Posterior cingulate gyrus (tissue), 11 donors: ENCODE measurements at regions of chr10 and their contacts with region 1.

Region 1: GRCh38 chr10:93376372-93377293 is 105.5 kb downstream of the MYOF start:
- DNase-seq: peak in 2 of 10 donors; percentile 21 to 23

Region 2: DNA sequence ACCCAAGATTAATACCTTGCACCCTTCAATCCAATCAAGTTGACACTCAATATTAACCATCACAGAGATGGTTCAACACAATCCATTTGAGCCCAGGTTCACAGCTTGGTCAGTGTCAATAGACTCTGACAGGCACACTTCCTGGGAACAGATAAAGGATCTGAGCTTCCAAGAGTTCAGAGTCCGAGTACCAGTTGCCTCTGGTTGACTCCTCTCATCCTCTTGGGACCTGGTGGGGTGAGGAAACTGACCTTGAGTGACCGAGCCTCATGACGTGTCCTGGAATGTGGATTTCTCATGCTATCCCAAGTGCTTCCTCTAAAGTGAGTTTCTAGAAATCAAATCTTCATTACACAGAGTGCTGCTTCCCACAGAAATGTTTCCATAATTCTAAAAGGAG is 140.9 kb before region 1 on chr10:
- intact Hi-C with region 1: no loop called
- DNase-seq: no peak

Region 3: DNA sequence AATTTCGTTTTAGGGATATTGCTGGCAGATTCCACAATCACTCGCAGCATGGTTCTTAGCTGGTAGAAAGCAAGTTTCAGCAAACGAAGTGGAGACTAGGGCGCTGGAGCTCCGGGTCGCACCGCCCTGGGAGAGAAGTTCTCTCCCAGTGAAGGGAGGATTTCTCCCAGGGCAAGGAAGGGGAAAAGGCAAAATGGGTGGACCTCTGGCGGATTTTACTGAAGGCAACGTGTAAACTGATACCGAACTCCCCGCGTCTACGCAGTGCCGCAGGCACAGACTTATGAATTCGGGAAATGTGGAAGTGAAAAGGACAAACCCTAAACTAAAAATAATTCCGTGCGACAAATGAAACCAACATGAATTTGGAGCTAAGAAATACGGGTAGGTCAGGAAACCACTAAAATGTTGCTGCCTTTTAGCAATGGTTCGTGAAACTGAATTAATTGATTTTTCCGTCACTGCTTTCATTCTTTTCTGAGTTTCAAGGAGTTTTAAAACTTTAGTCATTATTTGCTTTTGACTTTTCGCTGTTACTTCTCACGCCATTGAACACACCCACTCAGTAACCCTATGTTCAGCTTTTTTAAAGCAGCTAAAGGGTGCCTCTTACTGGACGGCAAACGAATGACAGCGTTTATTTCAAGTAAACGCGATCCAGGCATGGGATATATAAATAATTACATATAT is 105.7 kb after region 1 on chr10 and contains the start of gene MYOF:
- intact Hi-C with region 1: loop called (anchors 1 kb)
- DNase-seq: peak in 3 of 10 donors; percentile 27 to 58 (median 35)